ENCODE measurements at regions of chr2 and their contacts with region 1.

Region 1: DNA sequence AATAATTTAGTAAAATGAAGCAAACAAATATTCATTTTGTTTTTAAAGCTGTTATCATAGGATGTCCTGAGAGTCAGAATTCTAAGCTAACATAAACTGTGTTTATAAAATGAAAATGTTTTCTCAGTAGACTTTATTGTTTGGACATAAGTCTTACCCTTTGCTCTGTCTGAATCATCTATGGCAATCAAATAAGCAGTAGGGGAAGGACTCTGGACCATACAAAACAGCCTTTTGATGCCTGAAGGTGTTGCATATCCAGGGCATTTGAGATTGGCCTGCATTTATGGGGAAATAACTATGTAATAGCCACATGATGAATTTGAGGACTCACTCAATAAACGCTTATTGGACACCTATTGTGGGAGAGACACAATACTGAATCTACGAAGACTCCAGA is 123.0 kb upstream of the ATP5MC3 start:
- DNase-seq: no peak
- ATAC-seq: no peak
- H3K4me3 ChIP-seq: no peak overlapping the region
- H3K4me3 Mint-ChIP-seq: no peak overlapping the region
- H3K27ac ChIP-seq: no peak overlapping the region
- H3K27ac Mint-ChIP-seq: no peak overlapping the region
- H3K4me1 ChIP-seq: no peaks in the 10 kb centered on the region
- H3K4me1 Mint-ChIP-seq: no peaks in the 10 kb centered on the region
- H3K27me3 ChIP-seq: peaks cover 0 to 7% of the 10 kb centered on the region in 2 experiments
- H3K27me3 Mint-ChIP-seq: peaks cover 23 to 27% of the 10 kb centered on the region in 2 donors

Region 2: DNA sequence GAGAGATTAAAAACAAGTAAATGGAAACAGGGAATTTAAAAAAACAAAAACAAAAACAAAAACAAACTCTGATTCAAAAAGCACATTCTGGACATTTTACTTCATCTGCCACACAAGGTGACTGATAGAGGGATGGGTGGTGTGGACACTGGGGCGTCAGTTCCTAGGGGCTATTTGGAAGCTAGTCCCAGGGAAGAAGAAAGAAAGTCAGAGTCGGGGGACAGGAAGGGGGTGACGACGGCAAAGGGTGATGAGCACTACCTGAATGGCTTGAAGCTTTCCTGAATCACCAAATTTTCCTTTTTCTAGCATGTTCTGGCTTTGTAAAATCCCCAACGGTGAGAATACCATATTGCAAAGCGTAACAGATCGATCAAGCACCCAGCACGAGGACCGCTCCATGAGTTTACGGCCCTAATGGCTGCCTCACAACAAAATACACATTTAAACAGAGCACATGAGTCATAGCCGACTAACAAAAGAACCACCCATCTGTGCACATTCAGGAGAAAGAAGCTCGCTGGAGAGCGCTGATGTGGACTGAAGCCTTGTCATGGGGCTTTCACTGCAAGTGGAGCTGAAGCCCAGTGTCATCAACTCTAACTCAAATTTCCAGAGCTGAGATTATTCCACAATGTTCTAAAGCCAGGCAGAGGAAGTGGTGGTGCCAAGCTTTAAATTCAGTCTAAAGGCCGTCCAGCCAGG is 518.6 kb after region 1 on chr2:
- CTCF ChIA-PET with region 1: no interaction called
- POLR2A ChIA-PET with region 1: interaction called in 1 of 2 experiments, 13 read pairs
- DNase-seq: no peak
- ATAC-seq: no peak
- H3K4me3 ChIP-seq: no peak overlapping the region
- H3K4me3 Mint-ChIP-seq: no peak overlapping the region
- H3K27ac ChIP-seq: no peak overlapping the region
- H3K27ac Mint-ChIP-seq: no peak overlapping the region
- H3K4me1 ChIP-seq: no peaks in the 10 kb centered on the region
- H3K4me1 Mint-ChIP-seq: no peaks in the 10 kb centered on the region
- H3K27me3 ChIP-seq: no peaks in the 10 kb centered on the region
- H3K27me3 Mint-ChIP-seq: peaks cover 10 to 40% of the 10 kb centered on the region in 2 donors

Measured in T-cell (primary cell).